ENCODE measurements at regions of chr11 and their contacts with region 1.

Region 1: GRCh38 chr11:1921574-1922141 is 2.2 kb downstream of the TNNT3 start:
- DNase-seq: no peak
- H3K4me3 ChIP-seq: no peak overlapping the region
- H3K27ac ChIP-seq: peak overlapping the region in 3 of 4 donors; percentile 51 to 72 (median 55)
- H3K4me1 ChIP-seq: peaks cover 12 to 86% (median 30%) of the 10 kb centered on the region in 3 donors
- H3K27me3 ChIP-seq: peaks cover 0 to 19% (median 0%) of the 10 kb centered on the region in 4 donors
- CTCF ChIP-seq: no peak
- POLR2A ChIP-seq: no peak

Region 2: GRCh38 chr11:1839924-1840779 is 81.5 kb before region 1 on chr11:
- intact Hi-C with region 1: loop called (anchors 10 kb)
- DNase-seq: no peak
- H3K4me3 ChIP-seq: peak overlapping the region in 1 of 4 donors; percentile 9
- H3K27ac ChIP-seq: peak overlapping the region in 3 of 4 donors; percentile 17 to 49 (median 26)
- H3K4me1 ChIP-seq: peaks cover 13 to 100% (median 24%) of the 10 kb centered on the region in 3 donors
- H3K27me3 ChIP-seq: no peaks in the 10 kb centered on the region
- CTCF ChIP-seq: no peak
- POLR2A ChIP-seq: no peak

Region 3: DNA sequence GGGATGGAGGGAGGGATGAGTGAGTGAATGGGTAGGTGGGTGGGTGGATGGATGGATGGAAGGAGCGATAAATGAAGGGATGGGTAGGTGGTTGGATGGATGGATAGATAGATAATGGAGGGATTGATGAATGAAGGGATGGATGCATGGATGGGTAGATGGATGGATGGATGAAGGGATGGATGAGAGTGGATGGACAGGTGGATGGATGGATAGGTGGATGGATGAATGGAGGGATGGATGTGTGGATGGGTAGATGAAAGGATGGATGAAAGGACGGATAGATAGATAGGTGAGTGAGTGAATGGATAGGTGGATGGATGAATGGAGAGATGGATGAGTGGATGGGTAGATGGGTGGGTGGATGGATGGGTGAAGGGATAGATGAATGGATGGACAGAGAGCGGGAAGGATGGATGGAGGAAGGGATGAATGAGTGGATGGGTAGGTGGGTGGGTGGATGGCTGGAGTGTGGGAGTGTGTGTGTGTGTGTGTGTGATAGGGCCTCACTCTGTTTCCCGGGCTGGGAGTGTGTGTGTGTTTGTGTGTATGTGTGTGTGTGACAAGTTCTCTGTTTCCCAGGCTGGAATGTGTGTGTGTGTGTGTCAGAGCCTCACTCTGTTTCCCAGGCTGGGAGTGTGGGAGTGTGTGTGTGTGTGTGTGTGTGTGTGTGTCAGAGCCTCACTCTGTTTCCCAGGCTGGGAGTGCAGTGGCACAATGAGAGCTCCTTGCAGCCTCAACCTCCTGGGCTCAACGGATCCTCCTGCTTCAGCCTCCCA is 27.9 kb before region 1 on chr11:
- intact Hi-C with region 1: loop called (anchors 1 kb)
- DNase-seq: no peak
- H3K4me3 ChIP-seq: no peak overlapping the region
- H3K27ac ChIP-seq: no peak overlapping the region
- H3K4me1 ChIP-seq: peaks cover 0 to 21% (median 10%) of the 10 kb centered on the region in 3 donors
- H3K27me3 ChIP-seq: no peaks in the 10 kb centered on the region
- CTCF ChIP-seq: no peak
- POLR2A ChIP-seq: no peak